Activated CD4-positive, alpha-beta T cell treated with anti-CD3 and anti-CD28 coated beads for 36 hours (primary cell): ENCODE measurements at regions of chr13 and their contacts with region 1.

Region 1: GRCh38 chr13:29817604-29818378 is 32.6 kb downstream of the UBL3 start:
- DNase-seq: no peak
- ATAC-seq: peak; percentile 82
- H3K4me3 Mint-ChIP-seq: peak overlapping the region; percentile 46
- H3K27ac Mint-ChIP-seq: peak overlapping the region; percentile 80
- H3K4me1 Mint-ChIP-seq: peaks cover 55% of the 10 kb centered on the region
- H3K27me3 Mint-ChIP-seq: no peaks in the 10 kb centered on the region

Region 2: DNA sequence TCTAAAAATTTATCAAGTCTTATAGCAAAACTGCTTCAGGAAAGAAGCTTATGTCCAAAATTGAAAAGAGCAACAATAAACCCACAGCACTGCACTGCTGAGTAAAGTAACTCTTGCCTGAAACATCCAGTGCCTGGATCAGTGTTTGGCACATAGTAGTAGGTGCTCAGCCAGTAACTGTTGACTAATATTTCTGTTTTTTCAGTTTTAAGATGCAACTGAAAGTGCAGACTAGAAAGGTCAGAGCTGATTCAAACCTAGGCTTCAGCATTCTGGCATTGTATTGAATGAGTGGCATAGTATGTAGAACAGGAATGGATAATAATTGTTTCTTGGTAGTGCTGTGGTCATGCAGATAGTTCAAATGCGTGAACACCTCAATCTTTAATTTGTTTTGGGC is 35.0 kb before region 1 on chr13:
- CTCF ChIA-PET with region 1: no interaction called
- POLR2A ChIA-PET with region 1: no interaction called
- intact Hi-C with region 1: loop called in 1 of 2 experiments (anchors 5 kb)
- DNase-seq: peak; percentile 36
- ATAC-seq: peak; percentile 98
- H3K4me3 Mint-ChIP-seq: no peak overlapping the region
- H3K27ac Mint-ChIP-seq: peak overlapping the region; percentile 53
- H3K4me1 Mint-ChIP-seq: peaks cover 32% of the 10 kb centered on the region
- H3K27me3 Mint-ChIP-seq: no peaks in the 10 kb centered on the region

Region 3: DNA sequence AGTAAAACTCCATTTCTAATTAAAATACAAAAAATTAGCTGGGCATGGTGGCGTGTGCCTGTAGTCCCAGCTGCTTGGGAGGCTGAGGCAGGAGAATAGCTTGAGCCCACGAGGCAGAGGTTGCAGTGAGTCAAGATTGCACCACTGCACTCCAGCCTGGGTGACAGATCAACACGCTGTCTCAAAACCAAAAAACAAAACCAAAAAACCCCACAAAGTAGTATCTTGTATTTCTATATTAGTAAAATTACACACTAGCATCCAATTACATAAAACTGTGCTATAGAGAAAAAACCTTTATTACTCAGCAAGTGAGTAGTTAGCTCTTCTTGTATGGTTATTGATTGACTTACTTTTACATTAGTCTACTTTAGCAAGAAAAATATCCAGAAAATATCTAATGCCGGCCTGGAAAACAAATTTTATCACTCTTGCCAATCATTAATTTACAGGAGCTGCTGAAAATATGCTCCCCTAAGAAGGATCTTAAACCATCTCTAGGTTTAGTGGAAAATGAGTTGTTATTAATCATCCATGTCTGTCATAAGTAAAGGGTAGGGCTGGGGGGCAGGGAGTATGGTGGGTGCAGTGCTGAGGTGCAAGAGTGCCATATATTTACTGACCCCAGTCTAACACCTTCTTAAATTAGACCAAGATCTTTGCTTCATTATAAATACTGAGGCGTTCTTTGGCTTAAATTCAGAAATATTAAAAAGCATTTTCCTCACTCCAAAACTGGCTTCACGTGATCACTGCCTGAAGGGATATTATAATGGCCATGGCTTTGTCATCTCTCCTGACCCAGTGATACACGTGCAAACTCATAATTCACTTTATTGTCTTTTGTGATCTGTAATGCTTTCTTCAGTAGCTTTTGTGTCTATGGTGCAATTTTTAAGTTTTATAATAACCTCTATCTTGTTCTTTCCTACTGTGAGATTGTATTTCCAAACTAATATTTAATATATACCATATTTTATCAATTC is 11.5 kb before region 1 on chr13:
- CTCF ChIA-PET with region 1: interaction called, 10 read pairs
- POLR2A ChIA-PET with region 1: no interaction called
- intact Hi-C with region 1: no loop called
- DNase-seq: peak; percentile 61
- ATAC-seq: peak; percentile 90
- H3K4me3 Mint-ChIP-seq: no peak overlapping the region
- H3K27ac Mint-ChIP-seq: no peak overlapping the region
- H3K4me1 Mint-ChIP-seq: peaks cover 37% of the 10 kb centered on the region
- H3K27me3 Mint-ChIP-seq: no peaks in the 10 kb centered on the region

Region 4: GRCh38 chr13:29835280-29836061 is 17.7 kb after region 1 on chr13:
- CTCF ChIA-PET with region 1: interaction called, 4 read pairs
- POLR2A ChIA-PET with region 1: no interaction called
- intact Hi-C with region 1: loop called in 1 of 2 experiments (anchors 2 kb)
- DNase-seq: no peak
- ATAC-seq: no peak
- H3K4me3 Mint-ChIP-seq: no peak overlapping the region
- H3K27ac Mint-ChIP-seq: no peak overlapping the region
- H3K4me1 Mint-ChIP-seq: peaks cover 65% of the 10 kb centered on the region
- H3K27me3 Mint-ChIP-seq: no peaks in the 10 kb centered on the region

Region 5: DNA sequence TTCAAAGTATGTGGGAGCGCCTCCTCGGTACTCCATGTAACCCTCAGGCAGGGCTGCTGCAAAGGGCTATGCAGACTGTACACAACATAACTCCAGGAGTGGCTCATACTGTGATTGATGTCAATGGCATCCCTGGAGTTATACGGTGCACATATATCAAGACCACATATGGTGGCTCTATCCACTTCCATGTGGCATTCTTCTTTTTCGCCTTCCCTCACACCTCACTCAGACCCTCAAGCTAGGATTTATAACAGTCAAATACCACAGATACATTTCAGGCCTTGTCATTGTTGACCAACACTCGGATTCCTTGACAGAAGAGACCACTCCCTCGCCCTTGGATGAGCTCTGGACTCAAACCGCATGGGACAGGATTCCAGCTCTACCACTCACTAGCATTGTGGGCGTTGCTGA is 43.9 kb after region 1 on chr13:
- CTCF ChIA-PET with region 1: no interaction called
- POLR2A ChIA-PET with region 1: no interaction called
- intact Hi-C with region 1: no loop called
- DNase-seq: no peak
- ATAC-seq: no peak
- H3K4me3 Mint-ChIP-seq: no peak overlapping the region
- H3K27ac Mint-ChIP-seq: no peak overlapping the region
- H3K4me1 Mint-ChIP-seq: peaks cover 13% of the 10 kb centered on the region
- H3K27me3 Mint-ChIP-seq: peaks cover 4% of the 10 kb centered on the region